ENCODE measurements at regions of chr15 and their contacts with region 1.

Region 1: GRCh38 chr15:65818927-65819562 is 27.0 kb upstream of the DENND4A start:
- DNase-seq: no peak
- ATAC-seq: peak; percentile 79
- H3K4me3 Mint-ChIP-seq: peak overlapping the region; percentile 57
- H3K27ac Mint-ChIP-seq: peak overlapping the region; percentile 95
- H3K4me1 Mint-ChIP-seq: peaks cover 76% of the 10 kb centered on the region
- H3K27me3 Mint-ChIP-seq: no peaks in the 10 kb centered on the region
- CTCF ChIP-seq: no peak

Region 2: GRCh38 chr15:63953524-63953923 is 1865.5 kb before region 1 on chr15:
- CTCF ChIA-PET with region 1: no interaction called
- POLR2A ChIA-PET with region 1: no interaction called
- intact Hi-C with region 1: no loop called
- DNase-seq: no peak
- ATAC-seq: no peak
- H3K4me3 Mint-ChIP-seq: no peak overlapping the region
- H3K27ac Mint-ChIP-seq: no peak overlapping the region
- H3K4me1 Mint-ChIP-seq: peaks cover 8% of the 10 kb centered on the region
- H3K27me3 Mint-ChIP-seq: no peaks in the 10 kb centered on the region
- CTCF ChIP-seq: no peak

Region 3: DNA sequence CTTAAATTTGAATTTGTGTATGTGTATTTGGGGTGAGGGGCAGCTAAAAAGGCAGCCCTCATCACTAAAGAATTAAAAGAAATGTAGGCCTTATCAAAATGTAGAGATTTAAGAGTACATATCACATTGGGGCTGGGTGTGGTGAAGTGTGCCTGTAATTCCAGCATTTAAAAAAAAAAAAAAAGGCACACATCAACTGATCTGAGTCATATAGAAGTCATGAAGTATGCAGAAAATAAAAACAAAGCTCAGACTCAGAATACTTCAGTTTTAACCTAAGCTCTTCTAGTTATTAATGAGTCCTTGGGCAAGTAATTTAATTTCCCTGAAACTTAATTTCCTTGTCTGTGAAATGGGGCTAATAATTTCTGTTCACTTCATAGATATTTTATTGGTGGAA is 165.7 kb before region 1 on chr15:
- CTCF ChIA-PET with region 1: no interaction called
- POLR2A ChIA-PET with region 1: interaction called, 12 read pairs
- intact Hi-C with region 1: no loop called
- DNase-seq: no peak
- ATAC-seq: no peak
- H3K4me3 Mint-ChIP-seq: no peak overlapping the region
- H3K27ac Mint-ChIP-seq: no peak overlapping the region
- H3K4me1 Mint-ChIP-seq: peaks cover 7% of the 10 kb centered on the region
- H3K27me3 Mint-ChIP-seq: no peaks in the 10 kb centered on the region
- CTCF ChIP-seq: no peak

Region 4: GRCh38 chr15:65757256-65757655 is 61.8 kb before region 1 on chr15:
- CTCF ChIA-PET with region 1: no interaction called
- POLR2A ChIA-PET with region 1: no interaction called
- intact Hi-C with region 1: no loop called
- DNase-seq: no peak
- ATAC-seq: no peak
- H3K4me3 Mint-ChIP-seq: no peak overlapping the region
- H3K27ac Mint-ChIP-seq: peak overlapping the region; percentile 18
- H3K4me1 Mint-ChIP-seq: peaks cover 40% of the 10 kb centered on the region
- H3K27me3 Mint-ChIP-seq: no peaks in the 10 kb centered on the region
- CTCF ChIP-seq: no peak

Region 5: DNA sequence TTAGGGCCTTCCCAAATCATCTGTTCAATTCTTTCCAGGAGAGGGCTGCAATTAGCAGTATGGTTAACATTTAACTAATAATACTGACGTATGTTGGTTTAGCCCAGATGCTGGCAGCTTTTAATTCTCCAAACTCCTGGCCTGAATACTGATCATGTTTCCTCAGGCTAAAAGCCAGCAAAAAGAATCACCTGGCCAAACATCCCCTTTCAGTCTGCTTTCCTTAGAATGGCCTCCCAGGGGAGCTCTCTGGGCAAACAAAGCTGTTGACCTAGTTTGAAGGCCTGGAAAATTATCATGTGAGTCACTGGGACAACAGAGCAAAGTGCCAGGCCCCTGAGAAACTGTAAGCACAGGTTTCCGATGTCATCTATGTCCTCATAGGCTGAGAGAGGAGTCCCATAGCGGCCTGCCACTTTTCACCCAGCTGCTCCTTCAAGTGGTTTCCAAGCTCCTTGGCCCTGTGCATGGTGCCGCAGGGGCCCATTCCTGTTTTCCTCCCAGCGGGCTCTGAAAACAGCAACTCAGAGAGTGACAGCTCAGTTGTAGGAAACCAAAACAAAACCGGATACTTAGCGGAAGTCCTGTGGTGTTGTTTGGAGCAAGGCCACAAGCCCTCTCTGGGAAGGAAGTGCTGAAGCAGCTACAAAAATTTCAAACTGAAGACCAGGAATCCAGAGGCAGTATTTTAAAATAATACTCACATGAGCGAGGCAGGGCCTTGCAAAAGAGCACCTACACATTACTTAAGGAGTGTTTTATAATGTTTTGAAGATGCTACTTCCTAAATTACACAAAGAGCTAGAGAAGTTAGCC is 13.7 kb after region 1 on chr15:
- CTCF ChIA-PET with region 1: interaction called, 6 read pairs
- POLR2A ChIA-PET with region 1: interaction called, 6 read pairs
- intact Hi-C with region 1: loop called (anchors 1 kb)
- DNase-seq: peak; percentile 38
- ATAC-seq: peak; percentile 59
- H3K4me3 Mint-ChIP-seq: peak overlapping the region; percentile 68
- H3K27ac Mint-ChIP-seq: peak overlapping the region; percentile 86
- H3K4me1 Mint-ChIP-seq: peaks cover 64% of the 10 kb centered on the region
- H3K27me3 Mint-ChIP-seq: no peaks in the 10 kb centered on the region
- CTCF ChIP-seq: no peak

Region 6: GRCh38 chr15:65856821-65857455 is 37.9 kb after region 1 on chr15:
- CTCF ChIA-PET with region 1: no interaction called
- POLR2A ChIA-PET with region 1: interaction called, 16 read pairs
- intact Hi-C with region 1: no loop called
- DNase-seq: peak; percentile 47
- ATAC-seq: peak; percentile 82
- H3K4me3 Mint-ChIP-seq: no peak overlapping the region
- H3K27ac Mint-ChIP-seq: no peak overlapping the region
- H3K4me1 Mint-ChIP-seq: peaks cover 14% of the 10 kb centered on the region
- H3K27me3 Mint-ChIP-seq: no peaks in the 10 kb centered on the region
- CTCF ChIP-seq: peak; percentile 81

Region 7: DNA sequence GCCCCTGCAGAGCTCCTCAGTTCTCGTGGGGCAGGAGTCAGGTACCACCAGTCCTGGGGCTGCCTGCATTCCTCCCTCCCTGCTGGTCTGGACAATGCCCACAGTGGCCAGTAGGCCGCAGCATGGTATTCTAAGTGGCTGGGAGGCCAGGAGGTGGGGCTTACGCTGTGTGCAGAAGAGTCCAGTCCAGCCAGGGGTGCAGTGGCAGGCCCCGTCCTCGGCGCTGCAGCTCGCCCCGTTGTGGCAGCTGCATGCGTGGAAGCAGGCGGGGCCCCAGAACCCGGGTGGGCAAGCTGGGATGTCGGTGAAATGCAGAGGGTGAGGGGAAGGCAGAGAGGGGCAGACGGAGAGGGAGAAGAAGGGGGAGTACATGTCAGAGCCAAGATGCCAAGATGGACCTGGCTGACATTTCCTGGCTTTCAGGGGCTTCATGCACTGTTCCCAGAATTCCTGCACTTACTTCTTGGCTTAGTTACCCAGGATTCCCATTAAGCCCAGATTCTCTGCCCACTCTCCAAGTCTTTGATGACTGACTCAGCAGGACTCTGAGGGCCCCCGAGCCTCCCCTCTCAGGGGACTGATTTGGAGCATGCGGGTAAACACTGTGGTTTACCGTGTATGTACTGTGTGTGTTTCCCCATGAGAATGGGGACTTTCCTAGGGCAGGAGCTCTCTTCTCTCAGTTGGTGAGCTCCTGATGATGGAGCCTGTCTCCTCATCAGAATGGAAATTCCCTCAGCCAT is 97.8 kb after region 1 on chr15:
- CTCF ChIA-PET with region 1: no interaction called
- POLR2A ChIA-PET with region 1: no interaction called
- intact Hi-C with region 1: loop called (anchors 1 kb)
- DNase-seq: peak; percentile 64
- ATAC-seq: peak; percentile 91
- H3K4me3 Mint-ChIP-seq: peak overlapping the region; percentile 69
- H3K27ac Mint-ChIP-seq: peak overlapping the region; percentile 64
- H3K4me1 Mint-ChIP-seq: peaks cover 72% of the 10 kb centered on the region
- H3K27me3 Mint-ChIP-seq: no peaks in the 10 kb centered on the region
- CTCF ChIP-seq: no peak

Region 8: DNA sequence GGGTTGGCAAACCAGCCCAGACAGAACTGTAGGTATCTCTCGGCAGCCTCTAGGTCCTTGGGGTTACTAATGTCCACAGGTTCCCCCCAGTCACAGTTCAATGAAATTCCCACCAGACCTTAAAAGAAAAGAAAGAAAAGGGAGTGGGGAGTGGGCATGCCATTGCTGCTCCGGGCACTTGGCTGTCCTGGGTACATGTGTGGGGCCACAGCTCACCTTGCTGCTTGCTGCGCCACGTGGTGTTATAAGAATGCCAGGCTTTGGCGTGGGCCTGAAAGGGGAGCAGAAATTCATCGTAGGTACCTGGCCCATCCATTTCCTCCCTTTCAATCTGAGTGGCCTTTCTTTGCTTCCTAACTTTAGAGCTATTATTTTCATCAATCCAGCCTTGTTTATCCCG is 738.7 kb after region 1 on chr15:
- CTCF ChIA-PET with region 1: no interaction called
- POLR2A ChIA-PET with region 1: no interaction called
- intact Hi-C with region 1: no loop called
- DNase-seq: no peak
- ATAC-seq: no peak
- H3K4me3 Mint-ChIP-seq: no peak overlapping the region
- H3K27ac Mint-ChIP-seq: no peak overlapping the region
- H3K4me1 Mint-ChIP-seq: no peaks in the 10 kb centered on the region
- H3K27me3 Mint-ChIP-seq: no peaks in the 10 kb centered on the region
- CTCF ChIP-seq: no peak

Region 9: GRCh38 chr15:66720206-66721006 is 901.4 kb after region 1 on chr15:
- CTCF ChIA-PET with region 1: no interaction called
- POLR2A ChIA-PET with region 1: no interaction called
- intact Hi-C with region 1: no loop called
- DNase-seq: no peak
- ATAC-seq: no peak
- H3K4me3 Mint-ChIP-seq: no peak overlapping the region
- H3K27ac Mint-ChIP-seq: no peak overlapping the region
- H3K4me1 Mint-ChIP-seq: peaks cover 2% of the 10 kb centered on the region
- H3K27me3 Mint-ChIP-seq: peaks cover 36% of the 10 kb centered on the region
- CTCF ChIP-seq: no peak